Activated CD8-positive, alpha-beta T cell treated with anti-CD3 and anti-CD28 coated beads, Interleukin-2, amount 10 ng/mL, durations not matched to agents 7 days and 5 days (primary cell): ENCODE measurements at regions of chr17 and their contacts with region 1.

Region 1: GRCh38 chr17:35088881-35089585 is 25.5 kb upstream of the RFFL start:
- DNase-seq: peak; percentile 91
- ATAC-seq: peak; percentile 86
- H3K4me3 Mint-ChIP-seq: peak overlapping the region; percentile 88
- H3K27ac Mint-ChIP-seq: peak overlapping the region; percentile 95
- H3K4me1 Mint-ChIP-seq: peaks cover 45% of the 10 kb centered on the region
- H3K27me3 Mint-ChIP-seq: no peaks in the 10 kb centered on the region

Region 2: GRCh38 chr17:34721326-34721725 is 367.7 kb before region 1 on chr17:
- CTCF ChIA-PET with region 1: no interaction called
- POLR2A ChIA-PET with region 1: no interaction called
- DNase-seq: no peak
- ATAC-seq: no peak
- H3K4me3 Mint-ChIP-seq: no peak overlapping the region
- H3K27ac Mint-ChIP-seq: no peak overlapping the region
- H3K4me1 Mint-ChIP-seq: no peaks in the 10 kb centered on the region
- H3K27me3 Mint-ChIP-seq: no peaks in the 10 kb centered on the region

Region 3: GRCh38 chr17:34990921-34991365 is 98.1 kb before region 1 on chr17:
- CTCF ChIA-PET with region 1: interaction called, 18 read pairs
- POLR2A ChIA-PET with region 1: interaction called, 3 read pairs
- DNase-seq: no peak
- ATAC-seq: no peak
- H3K4me3 Mint-ChIP-seq: no peak overlapping the region
- H3K27ac Mint-ChIP-seq: peak overlapping the region; percentile 72
- H3K4me1 Mint-ChIP-seq: peaks cover 36% of the 10 kb centered on the region
- H3K27me3 Mint-ChIP-seq: no peaks in the 10 kb centered on the region

Region 4: GRCh38 chr17:35022536-35023063 is 66.4 kb before region 1 on chr17:
- CTCF ChIA-PET with region 1: interaction called, 54 read pairs
- POLR2A ChIA-PET with region 1: interaction called, 15 read pairs
- DNase-seq: peak; percentile 87
- ATAC-seq: peak; percentile 100
- H3K4me3 Mint-ChIP-seq: peak overlapping the region; percentile 66
- H3K27ac Mint-ChIP-seq: peak overlapping the region; percentile 98
- H3K4me1 Mint-ChIP-seq: peaks cover 40% of the 10 kb centered on the region
- H3K27me3 Mint-ChIP-seq: no peaks in the 10 kb centered on the region

Region 5: GRCh38 chr17:35063514-35064223 is 25.4 kb before region 1 on chr17 and contains the start of gene RFFL:
- CTCF ChIA-PET with region 1: interaction called, 48 read pairs
- POLR2A ChIA-PET with region 1: interaction called, 11 read pairs
- DNase-seq: peak; percentile 92
- ATAC-seq: peak; percentile 99
- H3K4me3 Mint-ChIP-seq: peak within 1 kb of the TSS; percentile 48
- H3K27ac Mint-ChIP-seq: peak within 1 kb of the TSS; percentile 85
- H3K4me1 Mint-ChIP-seq: peaks cover 49% of the 10 kb centered on the region
- H3K27me3 Mint-ChIP-seq: no peaks in the 10 kb centered on the region
- total RNA-seq, gene RFFL: 26.4 to 29.1 TPM

Region 6: DNA sequence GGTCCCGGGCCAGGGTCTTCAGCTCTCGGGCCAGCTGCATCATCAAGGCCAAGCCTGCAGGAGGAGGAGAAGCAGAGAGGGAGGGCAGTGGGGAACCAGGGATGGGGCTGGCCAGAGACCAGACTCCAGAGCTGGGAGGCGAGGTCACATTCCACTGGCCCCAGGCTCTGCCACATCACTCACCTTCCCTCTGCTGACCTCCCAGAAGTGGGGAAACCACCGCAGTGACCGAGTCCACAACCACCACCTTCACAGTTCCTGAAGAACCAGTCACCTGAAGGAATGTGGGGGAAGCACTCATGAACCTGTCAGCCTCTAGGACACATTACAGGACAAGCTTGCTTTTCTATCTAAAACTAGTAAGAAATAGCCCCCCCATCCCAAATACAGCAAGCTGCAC is 14.2 kb after region 1 on chr17:
- CTCF ChIA-PET with region 1: interaction called, 11 read pairs
- POLR2A ChIA-PET with region 1: interaction called, 5 read pairs
- DNase-seq: no peak
- ATAC-seq: no peak
- H3K4me3 Mint-ChIP-seq: no peak overlapping the region
- H3K27ac Mint-ChIP-seq: no peak overlapping the region
- H3K4me1 Mint-ChIP-seq: no peaks in the 10 kb centered on the region
- H3K27me3 Mint-ChIP-seq: no peaks in the 10 kb centered on the region

Region 7: DNA sequence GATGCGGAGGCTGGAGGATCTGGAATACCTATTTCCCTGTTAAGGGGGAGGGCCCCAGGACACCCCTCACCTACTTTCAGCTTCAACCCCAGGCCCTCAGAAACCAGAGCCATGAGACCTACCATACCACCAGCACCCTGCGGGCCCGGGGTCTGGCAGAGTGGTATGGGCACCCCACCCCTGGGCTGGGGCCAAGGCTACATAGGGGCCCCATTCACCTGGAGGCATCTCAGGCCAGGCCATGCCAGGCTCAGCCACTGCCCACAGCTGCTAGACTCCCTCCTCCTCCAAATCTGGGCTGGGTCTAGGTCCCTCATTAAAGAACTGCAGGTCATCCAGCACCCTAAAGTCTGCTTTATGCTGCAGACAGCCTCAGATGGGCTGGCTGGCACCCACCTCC is 41.4 kb after region 1 on chr17:
- CTCF ChIA-PET with region 1: no interaction called
- POLR2A ChIA-PET with region 1: no interaction called
- DNase-seq: no peak
- ATAC-seq: no peak
- H3K4me3 Mint-ChIP-seq: no peak overlapping the region
- H3K27ac Mint-ChIP-seq: peak overlapping the region; percentile 30
- H3K4me1 Mint-ChIP-seq: no peaks in the 10 kb centered on the region
- H3K27me3 Mint-ChIP-seq: no peaks in the 10 kb centered on the region

Region 8: GRCh38 chr17:35227546-35227945 is 138.5 kb after region 1 on chr17:
- CTCF ChIA-PET with region 1: no interaction called
- POLR2A ChIA-PET with region 1: no interaction called
- DNase-seq: no peak
- ATAC-seq: no peak
- H3K4me3 Mint-ChIP-seq: no peak overlapping the region
- H3K27ac Mint-ChIP-seq: no peak overlapping the region
- H3K4me1 Mint-ChIP-seq: peaks cover 24% of the 10 kb centered on the region
- H3K27me3 Mint-ChIP-seq: no peaks in the 10 kb centered on the region